ENCODE measurements at regions of chr17 and their contacts with region 1.

Region 1: GRCh38 chr17:73657473-73658116 is 13.3 kb upstream of the SDK2 start:
- DNase-seq: peak; percentile 53
- ATAC-seq: peak; percentile 98
- H3K4me3 ChIP-seq: no peak overlapping the region
- H3K27ac ChIP-seq: no peak overlapping the region
- H3K4me1 ChIP-seq: no peaks in the 10 kb centered on the region
- H3K27me3 ChIP-seq: peaks cover 0 to 13% of the 10 kb centered on the region in 2 experiments; a peak in 3 of 5 replicates
- CTCF ChIP-seq: peak; percentile 79
- EP300 ChIP-seq: no peak
- POLR2A ChIP-seq: no peak
- RAD21 ChIP-seq: peak; percentile 59

Region 2: GRCh38 chr17:73196500-73196899 is 461.1 kb before region 1 on chr17:
- CTCF ChIA-PET with region 1: no interaction called
- POLR2A ChIA-PET with region 1: no interaction called
- in situ Hi-C with region 1: no loop called
- intact Hi-C with region 1: no loop called
- DNase-seq: no peak
- ATAC-seq: no peak
- H3K4me3 ChIP-seq: no peak overlapping the region
- H3K27ac ChIP-seq: no peak overlapping the region
- H3K4me1 ChIP-seq: peaks cover 52% of the 10 kb centered on the region
- H3K27me3 ChIP-seq: no peaks in the 10 kb centered on the region; a peak in 1 of 5 replicates
- CTCF ChIP-seq: no peak
- EP300 ChIP-seq: no peak
- POLR2A ChIP-seq: no peak
- RAD21 ChIP-seq: no peak

Region 3: DNA sequence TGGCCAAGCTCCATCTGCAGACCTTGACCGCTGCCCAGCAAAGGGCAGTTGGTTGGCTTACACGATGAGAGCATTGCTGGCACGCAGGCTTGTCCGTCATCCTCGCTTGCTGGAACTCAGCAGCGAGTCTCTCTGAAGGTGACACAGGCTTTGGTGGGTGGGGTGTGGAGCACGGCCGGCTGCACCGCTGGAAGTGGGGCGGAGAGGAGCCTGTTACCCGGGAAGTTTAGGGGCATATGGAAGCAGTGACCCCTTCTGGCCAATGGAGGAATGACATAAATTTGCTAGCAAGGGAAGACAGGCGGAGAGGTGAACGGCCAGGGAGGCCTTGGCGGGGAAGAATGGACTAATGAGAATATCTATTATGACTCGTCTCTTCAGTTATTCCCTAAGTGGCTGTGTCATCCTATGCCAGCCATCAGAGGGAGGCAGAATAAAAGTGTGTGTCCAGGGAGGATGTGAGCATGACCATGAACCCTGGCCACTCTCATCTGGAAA is 52.5 kb after region 1 on chr17:
- CTCF ChIA-PET with region 1: interaction called, 12 read pairs
- POLR2A ChIA-PET with region 1: no interaction called
- in situ Hi-C with region 1: loop called (anchors 5 kb)
- intact Hi-C with region 1: loop called (anchors 10 kb)
- DNase-seq: peak; percentile 54
- ATAC-seq: peak; percentile 85
- H3K4me3 ChIP-seq: no peak overlapping the region
- H3K27ac ChIP-seq: no peak overlapping the region
- H3K4me1 ChIP-seq: no peaks in the 10 kb centered on the region
- H3K27me3 ChIP-seq: peaks cover 0 to 30% of the 10 kb centered on the region in 2 experiments; a peak in 4 of 5 replicates
- CTCF ChIP-seq: peak; percentile 90
- EP300 ChIP-seq: no peak
- POLR2A ChIP-seq: no peak
- RAD21 ChIP-seq: peak; percentile 75

Region 4: DNA sequence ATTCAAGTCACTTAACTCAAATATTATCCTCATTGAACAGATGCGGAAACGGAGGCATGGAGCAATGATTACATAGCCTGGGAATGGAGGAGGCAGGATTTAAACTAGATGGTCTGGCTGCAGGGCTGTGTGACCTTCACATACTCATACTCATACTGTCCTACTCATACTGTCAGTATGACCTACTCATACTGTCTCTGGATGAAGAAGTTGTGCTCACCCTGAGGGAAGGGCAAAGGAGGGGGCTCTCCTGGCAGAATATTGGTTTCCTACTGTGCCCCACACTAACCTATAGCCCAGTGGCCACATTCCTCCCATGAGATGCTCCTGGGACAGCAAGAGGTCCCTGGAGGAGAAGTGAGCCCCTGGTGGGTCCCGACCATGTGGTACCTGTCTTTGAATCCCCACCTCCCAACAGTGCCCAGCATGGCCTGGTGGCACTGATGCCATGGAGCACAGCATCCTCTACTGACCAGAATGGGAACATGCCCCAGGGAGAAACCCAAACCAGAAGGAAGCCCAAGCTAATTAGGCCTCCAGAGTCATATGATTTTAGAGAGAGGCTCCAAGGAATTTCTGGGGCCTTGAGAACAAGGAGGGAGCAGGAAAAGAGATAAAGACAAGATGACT is 184.0 kb after region 1 on chr17:
- CTCF ChIA-PET with region 1: interaction called, 8 read pairs
- POLR2A ChIA-PET with region 1: no interaction called
- in situ Hi-C with region 1: loop called (anchors 5 kb)
- intact Hi-C with region 1: loop called (anchors 1 kb)
- DNase-seq: peak; percentile 31
- ATAC-seq: peak; percentile 79
- H3K4me3 ChIP-seq: no peak overlapping the region
- H3K27ac ChIP-seq: no peak overlapping the region
- H3K4me1 ChIP-seq: no peaks in the 10 kb centered on the region
- H3K27me3 ChIP-seq: peaks cover 4 to 38% of the 10 kb centered on the region in 2 experiments; a peak in 4 of 5 replicates
- CTCF ChIP-seq: peak; percentile 87
- EP300 ChIP-seq: no peak
- POLR2A ChIP-seq: no peak
- RAD21 ChIP-seq: peak; percentile 89